ENCODE measurements at regions of chr12 and their contacts with region 1.

Region 1: GRCh38 chr12:93419388-93420034 is 22.2 kb downstream of the UBE2N start:
- DNase-seq: peak; percentile 76
- H3K4me3 ChIP-seq: no peak overlapping the region
- H3K27ac ChIP-seq: no peak overlapping the region
- H3K4me1 ChIP-seq: peaks cover 2% of the 10 kb centered on the region
- H3K27me3 ChIP-seq: no peaks in the 10 kb centered on the region
- CTCF ChIP-seq: peak; percentile 33 to 38
- POLR2A ChIP-seq: no peak

Region 2: GRCh38 chr12:92717202-92717601 is 702.3 kb before region 1 on chr12:
- CTCF ChIA-PET with region 1: interaction called, 9 read pairs
- POLR2A ChIA-PET with region 1: no interaction called
- dilution Hi-C with region 1: no loop called
- intact Hi-C with region 1: loop called (anchors 5 kb)
- DNase-seq: peak; percentile 64
- H3K4me3 ChIP-seq: no peak overlapping the region
- H3K27ac ChIP-seq: no peak overlapping the region
- H3K4me1 ChIP-seq: no peaks in the 10 kb centered on the region
- H3K27me3 ChIP-seq: no peaks in the 10 kb centered on the region
- CTCF ChIP-seq: peak; percentile 45 to 52
- POLR2A ChIP-seq: no peak

Region 3: GRCh38 chr12:92827836-92828431 is 591.6 kb before region 1 on chr12:
- CTCF ChIA-PET with region 1: interaction called, 14 read pairs
- POLR2A ChIA-PET with region 1: no interaction called
- dilution Hi-C with region 1: no loop called
- intact Hi-C with region 1: no loop called
- DNase-seq: peak; percentile 69
- H3K4me3 ChIP-seq: no peak overlapping the region
- H3K27ac ChIP-seq: no peak overlapping the region
- H3K4me1 ChIP-seq: no peaks in the 10 kb centered on the region
- H3K27me3 ChIP-seq: no peaks in the 10 kb centered on the region
- CTCF ChIP-seq: peak; percentile 61 to 67
- POLR2A ChIP-seq: no peak

Region 4: DNA sequence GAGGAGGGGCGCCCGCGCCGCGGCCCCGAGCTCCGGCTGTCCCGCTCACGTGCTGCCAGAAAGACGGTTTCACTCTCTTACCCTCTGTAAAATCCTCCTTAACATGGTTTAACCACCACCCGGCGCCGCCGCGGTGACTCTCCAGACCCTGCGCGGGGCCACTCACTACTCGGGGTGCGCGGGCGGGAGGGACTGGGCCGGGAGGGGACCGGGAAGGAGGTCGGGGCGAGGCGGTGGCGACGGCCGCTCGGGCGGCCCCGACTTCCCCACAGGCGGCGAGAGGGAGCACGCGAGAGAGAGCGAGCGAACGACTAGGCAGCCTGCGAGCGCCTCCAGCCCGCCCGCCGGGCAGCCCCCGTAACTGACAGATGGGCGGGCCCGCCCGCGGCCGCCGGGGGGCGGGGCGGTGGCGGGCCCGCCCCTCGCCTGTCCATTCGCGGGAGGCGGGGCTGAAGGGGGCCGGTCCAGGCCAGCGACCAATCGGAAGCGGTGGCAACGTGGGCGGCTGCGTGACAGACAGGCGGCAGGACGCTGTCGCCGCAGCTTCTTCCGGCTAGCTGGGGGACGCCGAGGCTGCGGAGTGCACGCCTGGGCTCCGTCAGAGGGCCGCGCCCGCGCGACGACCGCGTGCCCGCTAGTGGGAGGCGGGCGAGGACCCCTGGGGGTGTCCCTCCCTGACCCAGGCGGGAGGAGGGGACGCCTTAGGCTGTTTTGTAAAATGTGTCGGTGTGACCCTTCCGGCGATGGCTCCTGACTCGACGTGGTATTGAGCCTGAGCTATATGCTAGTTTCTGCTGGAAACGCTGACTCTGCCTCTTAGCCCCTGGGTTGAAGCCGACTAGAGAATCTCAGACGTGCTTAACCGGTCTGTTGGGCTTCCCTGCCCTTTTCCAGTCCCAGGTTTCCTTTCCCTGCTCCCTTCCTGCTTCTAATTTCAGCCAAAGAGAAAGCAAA is 490.3 kb before region 1 on chr12 and contains the start of gene EEA1:
- CTCF ChIA-PET with region 1: interaction called, 28 read pairs
- POLR2A ChIA-PET with region 1: no interaction called
- dilution Hi-C with region 1: no loop called
- intact Hi-C with region 1: loop called (anchors 5 kb)
- DNase-seq: peak; percentile 96
- H3K4me3 ChIP-seq: peak within 1 kb of the TSS; percentile 91 to 97 (median 95)
- H3K27ac ChIP-seq: peak within 1 kb of the TSS; percentile 90
- H3K4me1 ChIP-seq: peaks cover 17% of the 10 kb centered on the region
- H3K27me3 ChIP-seq: no peaks in the 10 kb centered on the region
- CTCF ChIP-seq: peak in 1 of 2 donors; percentile 34
- POLR2A ChIP-seq: peak; percentile 83
- total RNA-seq, gene EEA1: 37.9 and 38.8 TPM in 2 replicates

Region 5: GRCh38 chr12:93098077-93098476 is 321.4 kb before region 1 on chr12:
- CTCF ChIA-PET with region 1: interaction called, 14 read pairs
- POLR2A ChIA-PET with region 1: no interaction called
- dilution Hi-C with region 1: no loop called
- intact Hi-C with region 1: no loop called
- DNase-seq: peak; percentile 53
- H3K4me3 ChIP-seq: no peak overlapping the region
- H3K27ac ChIP-seq: no peak overlapping the region
- H3K4me1 ChIP-seq: no peaks in the 10 kb centered on the region
- H3K27me3 ChIP-seq: no peaks in the 10 kb centered on the region
- CTCF ChIP-seq: peak; percentile 21 to 22
- POLR2A ChIP-seq: no peak

Region 6: DNA sequence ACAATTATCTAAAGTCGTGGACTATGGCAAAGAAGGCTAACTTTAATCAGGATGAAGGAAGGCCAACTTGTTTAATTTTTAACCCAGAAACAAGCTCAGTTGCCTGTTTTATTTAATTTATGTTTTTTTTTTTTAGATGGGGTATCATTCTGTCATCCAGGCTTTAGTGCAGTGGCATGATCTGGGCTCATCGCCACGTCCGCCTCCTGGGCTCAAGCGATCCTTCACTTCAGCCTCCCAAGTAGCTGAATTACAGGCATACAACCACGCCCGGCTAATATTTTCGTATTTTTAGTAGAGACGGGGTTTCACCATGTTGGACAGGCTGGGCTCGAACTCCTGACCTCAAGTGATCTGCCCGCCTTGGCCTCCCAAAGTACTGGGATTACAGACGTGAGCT is 22.1 kb before region 1 on chr12:
- CTCF ChIA-PET with region 1: interaction called, 12 read pairs
- POLR2A ChIA-PET with region 1: no interaction called
- dilution Hi-C with region 1: no loop called
- intact Hi-C with region 1: no loop called
- DNase-seq: no peak
- H3K4me3 ChIP-seq: no peak overlapping the region
- H3K27ac ChIP-seq: no peak overlapping the region
- H3K4me1 ChIP-seq: no peaks in the 10 kb centered on the region
- H3K27me3 ChIP-seq: no peaks in the 10 kb centered on the region
- CTCF ChIP-seq: no peak
- POLR2A ChIP-seq: no peak